ENCODE measurements at regions of chr20 and their contacts with region 1.

Region 1: GRCh38 chr20:10636326-10636818 is 37.4 kb downstream of the JAG1 start:
- DNase-seq: no peak
- H3K4me3 ChIP-seq: no peak overlapping the region
- H3K27ac ChIP-seq: no peak overlapping the region
- H3K4me1 ChIP-seq: peaks cover 10 to 33% (median 25%) of the 10 kb centered on the region in 4 experiments
- H3K27me3 ChIP-seq: no peaks in the 10 kb centered on the region; a peak in 1 of 7 replicates
- CTCF ChIP-seq: no peak
- EP300 ChIP-seq: no peak
- POLR2A ChIP-seq: no peak
- RAD21 ChIP-seq: no peak

Region 2: GRCh38 chr20:10369723-10370090 is 266.7 kb before region 1 on chr20:
- CTCF ChIA-PET with region 1: no interaction called
- POLR2A ChIA-PET with region 1: no interaction called
- DNase-seq: no peak
- H3K4me3 ChIP-seq: no peak overlapping the region
- H3K27ac ChIP-seq: no peak overlapping the region
- H3K4me1 ChIP-seq: no peaks in the 10 kb centered on the region; a peak in 1 of 7 replicates
- H3K27me3 ChIP-seq: no peaks in the 10 kb centered on the region
- CTCF ChIP-seq: no peak
- EP300 ChIP-seq: no peak
- POLR2A ChIP-seq: no peak
- RAD21 ChIP-seq: no peak

Region 3: GRCh38 chr20:10553326-10553984 is 82.9 kb before region 1 on chr20:
- CTCF ChIA-PET with region 1: interaction called, 13 read pairs
- POLR2A ChIA-PET with region 1: no interaction called
- DNase-seq: no peak
- H3K4me3 ChIP-seq: no peak overlapping the region
- H3K27ac ChIP-seq: no peak overlapping the region
- H3K4me1 ChIP-seq: peaks cover 6 to 22% (median 16%) of the 10 kb centered on the region in 4 experiments
- H3K27me3 ChIP-seq: no peaks in the 10 kb centered on the region
- CTCF ChIP-seq: peak; percentile 15 to 81 (median 63)
- EP300 ChIP-seq: no peak
- POLR2A ChIP-seq: no peak
- RAD21 ChIP-seq: peak; percentile 83 to 89

Region 4: GRCh38 chr20:10647465-10647864 is 11.1 kb after region 1 on chr20:
- CTCF ChIA-PET with region 1: interaction called, 55 read pairs
- POLR2A ChIA-PET with region 1: interaction called, 7 read pairs
- DNase-seq: no peak
- H3K4me3 ChIP-seq: no peak overlapping the region
- H3K27ac ChIP-seq: no peak overlapping the region
- H3K4me1 ChIP-seq: peaks cover 4 to 18% (median 11%) of the 10 kb centered on the region in 4 experiments; a peak in 6 of 7 replicates
- H3K27me3 ChIP-seq: no peaks in the 10 kb centered on the region
- CTCF ChIP-seq: peak; percentile 59 to 72 (median 60)
- EP300 ChIP-seq: no peak
- POLR2A ChIP-seq: no peak
- RAD21 ChIP-seq: peak; percentile 50 to 66

Measured in H1 (cell line).